IMR-90 (cell line): ENCODE measurements at regions of chr7 and their contacts with region 1.

Region 1: GRCh38 chr7:26853788-26854393 is 10.5 kb downstream of the SKAP2 start:
- DNase-seq: peak; percentile 75
- ATAC-seq: 0 out of 2 replicates have a peak, but pooled peaks have one; percentile 51
- H3K4me3 ChIP-seq: no peak overlapping the region
- H3K27ac ChIP-seq: no peak overlapping the region
- H3K4me1 ChIP-seq: no peaks in the 10 kb centered on the region; the same call in 1 of the 2 replicates
- H3K27me3 ChIP-seq: no peaks in the 10 kb centered on the region
- CTCF ChIP-seq: peak; percentile 70
- POLR2A ChIP-seq: no peak
- RAD21 ChIP-seq: peak; percentile 70

Region 2: DNA sequence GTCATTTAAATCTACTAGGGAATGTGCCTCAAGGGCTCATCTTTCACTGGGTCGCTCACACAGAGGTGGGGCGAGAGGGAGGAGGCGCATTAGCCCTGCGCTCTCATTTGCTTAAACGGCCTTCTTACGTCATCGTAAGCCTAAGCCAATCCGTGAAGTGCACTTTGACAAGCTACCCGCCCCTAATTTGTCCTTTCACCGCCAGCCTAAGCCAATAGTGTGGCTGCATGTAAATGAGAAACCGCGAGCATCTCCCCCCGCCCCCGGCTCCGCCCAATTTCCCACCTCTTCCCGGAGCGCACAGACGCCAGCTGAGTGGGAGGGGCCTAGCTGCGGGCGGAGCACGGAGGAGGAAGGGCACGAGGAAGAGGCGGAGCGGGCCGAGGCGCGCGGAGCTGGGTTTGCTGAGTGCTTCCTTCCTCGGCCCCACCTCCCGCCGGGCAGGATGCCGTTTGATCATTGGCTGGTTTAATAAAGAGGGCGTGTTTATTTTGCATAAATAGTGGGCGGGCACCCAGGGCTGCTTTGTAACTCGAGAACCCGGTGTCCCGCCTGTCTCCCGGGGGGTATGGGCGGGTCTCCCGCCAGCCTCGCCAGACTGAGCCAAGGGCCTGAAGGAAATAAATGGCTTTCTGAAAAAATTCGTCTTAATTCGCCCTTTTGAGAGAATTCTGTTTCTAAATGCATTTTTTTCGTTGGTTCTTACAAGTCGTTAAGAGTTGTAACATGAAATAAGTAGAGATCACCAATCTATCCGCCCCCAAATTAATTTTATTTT is 991.4 kb before region 1 on chr7:
- CTCF ChIA-PET with region 1: no interaction called
- POLR2A ChIA-PET with region 1: no interaction called
- dilution Hi-C with region 1: no loop called
- in situ Hi-C with region 1: loop called (anchors 10 kb)
- intact Hi-C with region 1: loop called (anchors 10 kb)
- DNase-seq: peak; percentile 100
- ATAC-seq: peak; percentile 97
- H3K4me3 ChIP-seq: no peak overlapping the region; the same call in 1 of the 2 replicates
- H3K27ac ChIP-seq: no peak overlapping the region
- H3K4me1 ChIP-seq: no peaks in the 10 kb centered on the region
- H3K27me3 ChIP-seq: peaks cover 10% of the 10 kb centered on the region
- CTCF ChIP-seq: no peak
- POLR2A ChIP-seq: no peak
- RAD21 ChIP-seq: no peak

Region 3: DNA sequence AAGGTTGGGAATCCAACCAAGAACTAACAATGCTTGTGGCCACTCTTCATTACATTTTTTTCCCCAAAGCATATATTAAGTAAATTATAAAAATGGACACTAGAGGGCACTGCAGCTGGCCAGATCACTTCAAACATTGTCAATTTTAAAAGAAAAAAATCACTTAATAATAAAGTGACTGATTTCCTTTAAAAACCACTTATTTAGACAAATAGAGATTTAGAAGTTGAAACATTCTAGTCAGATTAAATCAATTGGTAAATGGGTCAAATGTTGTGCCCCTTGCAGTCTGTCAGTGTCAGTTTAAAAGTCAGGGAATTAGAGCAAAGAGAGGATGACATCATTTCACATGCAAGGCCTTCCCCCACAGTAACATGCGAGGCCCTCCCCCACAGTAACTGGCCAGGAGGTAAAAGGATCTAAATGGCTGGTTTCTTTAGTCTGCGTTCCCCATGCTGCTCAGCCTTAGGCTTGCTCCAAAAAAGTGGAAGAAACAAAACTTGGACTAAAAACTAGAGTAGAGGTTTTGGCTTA is 167.4 kb before region 1 on chr7:
- CTCF ChIA-PET with region 1: interaction called, 4 read pairs
- POLR2A ChIA-PET with region 1: no interaction called
- dilution Hi-C with region 1: no loop called
- in situ Hi-C with region 1: no loop called
- intact Hi-C with region 1: loop called (anchors 1 kb)
- DNase-seq: peak; percentile 92
- ATAC-seq: peak; percentile 81
- H3K4me3 ChIP-seq: no peak overlapping the region
- H3K27ac ChIP-seq: peak overlapping the region; percentile 22; the same call in 1 of the 2 replicates
- H3K4me1 ChIP-seq: peaks cover 8% of the 10 kb centered on the region
- H3K27me3 ChIP-seq: no peaks in the 10 kb centered on the region
- CTCF ChIP-seq: peak; percentile 64
- POLR2A ChIP-seq: no peak
- RAD21 ChIP-seq: peak; percentile 61

Region 4: GRCh38 chr7:27102581-27103442 is 248.9 kb after region 1 on chr7 and contains the start of gene HOXA2:
- CTCF ChIA-PET with region 1: interaction called, 3 read pairs
- POLR2A ChIA-PET with region 1: no interaction called
- dilution Hi-C with region 1: no loop called
- in situ Hi-C with region 1: loop called (anchors 5 kb)
- intact Hi-C with region 1: loop called (anchors 1 kb)
- DNase-seq: peak; percentile 91
- ATAC-seq: peak; percentile 18
- H3K4me3 ChIP-seq: peak within 1 kb of the TSS; percentile 52
- H3K27ac ChIP-seq: peak within 1 kb of the TSS; percentile 96
- H3K4me1 ChIP-seq: peaks cover 31% of the 10 kb centered on the region
- H3K27me3 ChIP-seq: no peaks in the 10 kb centered on the region
- CTCF ChIP-seq: no peak
- POLR2A ChIP-seq: no peak
- RAD21 ChIP-seq: no peak
- total RNA-seq, gene HOXA2: 1.6 and 1.7 TPM in 2 replicates